Esophagus muscularis mucosa (tissue), 4 donors: ENCODE measurements at regions of chr12 and their contacts with region 1.

Region 1: GRCh38 chr12:42277396-42278127 is 39.5 kb upstream of the YAF2 start:
- DNase-seq: no peak
- H3K4me3 ChIP-seq: no peak overlapping the region
- H3K27ac ChIP-seq: no peak overlapping the region
- H3K4me1 ChIP-seq: no peaks in the 10 kb centered on the region
- H3K27me3 ChIP-seq: no peaks in the 10 kb centered on the region
- CTCF ChIP-seq: no peak
- EP300 ChIP-seq: no peak
- POLR2A ChIP-seq: no peak

Region 2: DNA sequence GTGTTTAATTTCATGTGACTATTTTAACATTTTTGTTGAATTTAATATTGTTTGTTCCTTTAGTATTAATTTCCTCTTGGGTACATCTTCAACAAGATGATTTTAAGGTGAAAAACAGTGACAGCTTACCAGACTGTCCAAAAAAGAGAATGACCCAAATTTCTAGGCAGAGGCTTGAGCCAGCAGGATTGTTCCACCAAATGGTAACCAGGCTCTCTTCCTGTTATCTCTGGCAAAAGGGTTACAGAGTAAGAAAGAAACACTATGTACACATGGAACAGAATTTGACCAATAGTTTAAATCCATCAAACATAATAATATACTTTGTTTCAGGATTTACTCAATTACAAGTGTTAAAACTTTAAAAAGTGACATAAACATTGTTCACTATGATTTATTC is 78.6 kb before region 1 on chr12:
- intact Hi-C with region 1: loop called (anchors 2 kb)
- DNase-seq: no peak
- H3K4me3 ChIP-seq: no peak overlapping the region
- H3K27ac ChIP-seq: no peak overlapping the region
- H3K4me1 ChIP-seq: peaks cover 0 to 5% (median 0%) of the 10 kb centered on the region in 4 donors
- H3K27me3 ChIP-seq: no peaks in the 10 kb centered on the region
- CTCF ChIP-seq: no peak
- EP300 ChIP-seq: no peak
- POLR2A ChIP-seq: no peak

Region 3: DNA sequence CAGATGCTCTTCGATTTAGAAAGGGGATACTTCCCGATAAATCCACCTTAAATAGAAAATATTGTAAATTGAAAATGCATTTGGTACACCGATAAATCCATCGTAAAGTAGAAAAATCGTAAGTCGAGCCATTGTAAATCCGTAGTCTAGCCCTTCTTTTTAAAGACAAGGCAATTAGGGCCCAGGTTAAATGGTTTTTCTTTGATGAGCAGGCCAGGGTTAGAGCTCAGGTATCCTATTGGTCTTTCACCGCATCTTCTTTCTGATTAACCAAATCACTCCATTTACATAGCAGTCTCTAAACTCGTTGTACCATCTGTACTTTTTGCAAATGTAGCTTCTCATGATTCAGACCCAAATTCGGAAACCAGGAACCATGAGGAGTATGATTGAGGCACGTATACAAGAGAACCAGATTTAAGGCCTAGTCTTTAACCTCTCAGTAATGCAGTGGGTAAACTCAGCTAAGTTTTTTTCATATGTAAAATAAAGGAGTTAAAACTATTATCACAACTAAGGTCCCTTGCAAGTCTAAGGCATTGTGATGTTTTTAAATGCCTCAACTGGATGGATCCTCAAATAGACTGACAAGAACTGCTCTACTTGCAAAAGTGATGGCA is 37.3 kb before region 1 on chr12:
- intact Hi-C with region 1: no loop called
- DNase-seq: no peak
- H3K4me3 ChIP-seq: no peak overlapping the region
- H3K27ac ChIP-seq: no peak overlapping the region
- H3K4me1 ChIP-seq: peaks cover 13 to 33% (median 27%) of the 10 kb centered on the region in 4 donors
- H3K27me3 ChIP-seq: no peaks in the 10 kb centered on the region
- CTCF ChIP-seq: no peak
- EP300 ChIP-seq: no peak
- POLR2A ChIP-seq: no peak

Region 4: DNA sequence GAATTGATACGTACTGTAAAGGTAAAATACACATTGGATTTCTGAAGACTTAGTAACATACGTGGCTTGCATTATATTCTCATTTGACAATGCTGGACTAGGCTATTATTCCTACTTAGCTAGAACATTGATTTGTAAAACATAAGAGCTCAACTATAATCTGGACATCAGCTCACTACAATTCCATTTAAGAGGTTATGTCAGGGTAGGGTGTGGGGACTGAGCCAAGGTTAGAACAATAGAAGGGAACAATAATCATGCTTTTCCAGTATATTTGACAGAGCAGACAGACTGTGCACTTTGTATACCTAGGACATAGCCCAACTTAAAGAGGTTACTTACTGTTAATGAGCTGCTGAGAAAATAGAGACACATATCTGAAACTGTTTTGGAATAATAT is 37.5 kb after region 1 on chr12:
- intact Hi-C with region 1: no loop called
- DNase-seq: no peak
- H3K4me3 ChIP-seq: no peak overlapping the region
- H3K27ac ChIP-seq: no peak overlapping the region
- H3K4me1 ChIP-seq: no peaks in the 10 kb centered on the region
- H3K27me3 ChIP-seq: no peaks in the 10 kb centered on the region
- CTCF ChIP-seq: no peak
- EP300 ChIP-seq: no peak
- POLR2A ChIP-seq: no peak

Region 5: GRCh38 chr12:42421844-42422779 is 144.6 kb after region 1 on chr12:
- intact Hi-C with region 1: no loop called
- DNase-seq: no peak
- H3K4me3 ChIP-seq: no peak overlapping the region
- H3K27ac ChIP-seq: peak overlapping the region in 2 of 4 donors; percentile 15 to 21
- H3K4me1 ChIP-seq: peaks cover 9 to 18% (median 13%) of the 10 kb centered on the region in 4 donors
- H3K27me3 ChIP-seq: no peaks in the 10 kb centered on the region
- CTCF ChIP-seq: no peak
- EP300 ChIP-seq: no peak
- POLR2A ChIP-seq: no peak

Region 6: DNA sequence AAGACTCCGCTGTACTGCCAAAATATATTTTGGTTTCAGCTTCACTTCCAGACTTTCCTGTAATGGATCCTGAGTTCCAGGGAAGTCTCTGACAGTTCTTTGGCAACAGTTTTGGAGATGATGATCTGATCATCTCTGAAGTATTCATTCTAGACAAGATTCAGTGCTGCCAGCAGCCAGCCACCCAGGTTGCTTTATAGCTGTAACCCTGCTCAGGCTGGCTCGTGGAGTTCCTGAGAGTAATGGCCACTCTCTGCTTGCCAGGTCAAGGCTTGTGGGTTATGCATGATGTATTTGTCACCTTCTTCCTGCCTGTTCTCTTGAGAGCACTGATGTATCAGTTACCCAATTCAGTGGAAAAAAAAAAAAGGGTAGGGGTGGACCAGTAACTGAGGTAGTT is 172.7 kb after region 1 on chr12:
- intact Hi-C with region 1: no loop called
- DNase-seq: no peak
- H3K4me3 ChIP-seq: no peak overlapping the region
- H3K27ac ChIP-seq: no peak overlapping the region
- H3K4me1 ChIP-seq: peaks cover 0 to 5% (median 2%) of the 10 kb centered on the region in 4 donors
- H3K27me3 ChIP-seq: no peaks in the 10 kb centered on the region
- CTCF ChIP-seq: no peak
- EP300 ChIP-seq: no peak
- POLR2A ChIP-seq: no peak